Activated CD4-positive, alpha-beta T cell treated with anti-CD3 and anti-CD28 coated beads for 36 hours (primary cell): ENCODE measurements at regions of chr14 and their contacts with region 1.

Region 1: GRCh38 chr14:71138448-71139293 is 231.4 kb downstream of the PCNX1 start:
- DNase-seq: peak; percentile 73
- ATAC-seq: peak; percentile 17
- H3K4me3 Mint-ChIP-seq: no peak overlapping the region
- H3K27ac Mint-ChIP-seq: no peak overlapping the region
- H3K4me1 Mint-ChIP-seq: peaks cover 28% of the 10 kb centered on the region
- H3K27me3 Mint-ChIP-seq: peaks cover 3% of the 10 kb centered on the region

Region 2: GRCh38 chr14:71103662-71104484 is 34.8 kb before region 1 on chr14:
- CTCF ChIA-PET with region 1: interaction called, 10 read pairs
- POLR2A ChIA-PET with region 1: no interaction called
- intact Hi-C with region 1: no loop called
- DNase-seq: no peak
- ATAC-seq: no peak
- H3K4me3 Mint-ChIP-seq: no peak overlapping the region
- H3K27ac Mint-ChIP-seq: no peak overlapping the region
- H3K4me1 Mint-ChIP-seq: peaks cover 4% of the 10 kb centered on the region
- H3K27me3 Mint-ChIP-seq: no peaks in the 10 kb centered on the region

Region 3: GRCh38 chr14:71267007-71267513 is 128.4 kb after region 1 on chr14:
- CTCF ChIA-PET with region 1: interaction called, 3 read pairs
- POLR2A ChIA-PET with region 1: no interaction called
- intact Hi-C with region 1: loop called (anchors 1 kb)
- DNase-seq: peak; percentile 26
- ATAC-seq: peak; percentile 88
- H3K4me3 Mint-ChIP-seq: no peak overlapping the region
- H3K27ac Mint-ChIP-seq: no peak overlapping the region
- H3K4me1 Mint-ChIP-seq: peaks cover 19% of the 10 kb centered on the region
- H3K27me3 Mint-ChIP-seq: no peaks in the 10 kb centered on the region

Region 4: GRCh38 chr14:71403656-71404055 is 265.0 kb after region 1 on chr14:
- CTCF ChIA-PET with region 1: interaction called, 7 read pairs
- POLR2A ChIA-PET with region 1: interaction called, 3 read pairs
- intact Hi-C with region 1: loop called (anchors 2 to 5 kb)
- DNase-seq: peak; percentile 43
- ATAC-seq: peak; percentile 78
- H3K4me3 Mint-ChIP-seq: no peak overlapping the region
- H3K27ac Mint-ChIP-seq: no peak overlapping the region
- H3K4me1 Mint-ChIP-seq: peaks cover 34% of the 10 kb centered on the region
- H3K27me3 Mint-ChIP-seq: no peaks in the 10 kb centered on the region

Region 5: DNA sequence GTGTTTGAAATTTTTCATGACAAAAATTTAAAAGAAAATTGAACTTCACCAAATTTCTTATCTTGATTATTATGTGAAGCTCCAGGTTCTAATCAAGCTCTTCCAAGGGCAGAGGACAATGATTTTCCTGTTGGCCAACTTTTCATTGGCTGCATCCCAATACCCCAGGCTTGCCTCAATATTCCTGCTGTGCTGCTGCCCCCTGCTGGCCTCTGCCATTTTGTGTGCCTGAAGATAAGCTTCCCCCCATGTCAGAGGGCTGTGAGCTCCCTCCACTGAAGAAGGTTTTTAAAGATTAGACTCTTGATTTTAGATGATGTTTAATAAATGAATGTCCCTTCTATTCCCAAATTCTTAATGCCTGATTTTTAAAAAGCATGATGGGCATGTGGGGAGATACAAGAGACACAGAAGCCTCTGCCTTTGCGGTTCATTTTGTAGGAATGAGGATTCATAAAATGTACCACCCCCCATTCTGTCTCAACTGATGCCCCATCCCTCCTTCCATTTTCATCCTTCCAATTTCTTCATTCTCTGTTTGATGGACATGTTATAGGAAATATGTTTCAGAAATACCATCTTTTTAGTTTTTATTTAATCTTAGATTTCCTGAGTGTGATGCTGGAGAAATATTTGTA is 716.8 kb after region 1 on chr14:
- CTCF ChIA-PET with region 1: no interaction called
- POLR2A ChIA-PET with region 1: no interaction called
- intact Hi-C with region 1: loop called (anchors 1 kb)
- DNase-seq: peak; percentile 78
- ATAC-seq: peak; percentile 33
- H3K4me3 Mint-ChIP-seq: no peak overlapping the region
- H3K27ac Mint-ChIP-seq: no peak overlapping the region
- H3K4me1 Mint-ChIP-seq: peaks cover 3% of the 10 kb centered on the region
- H3K27me3 Mint-ChIP-seq: peaks cover 34% of the 10 kb centered on the region